ENCODE measurements at regions of chr19 and their contacts with region 1.

Region 1: DNA sequence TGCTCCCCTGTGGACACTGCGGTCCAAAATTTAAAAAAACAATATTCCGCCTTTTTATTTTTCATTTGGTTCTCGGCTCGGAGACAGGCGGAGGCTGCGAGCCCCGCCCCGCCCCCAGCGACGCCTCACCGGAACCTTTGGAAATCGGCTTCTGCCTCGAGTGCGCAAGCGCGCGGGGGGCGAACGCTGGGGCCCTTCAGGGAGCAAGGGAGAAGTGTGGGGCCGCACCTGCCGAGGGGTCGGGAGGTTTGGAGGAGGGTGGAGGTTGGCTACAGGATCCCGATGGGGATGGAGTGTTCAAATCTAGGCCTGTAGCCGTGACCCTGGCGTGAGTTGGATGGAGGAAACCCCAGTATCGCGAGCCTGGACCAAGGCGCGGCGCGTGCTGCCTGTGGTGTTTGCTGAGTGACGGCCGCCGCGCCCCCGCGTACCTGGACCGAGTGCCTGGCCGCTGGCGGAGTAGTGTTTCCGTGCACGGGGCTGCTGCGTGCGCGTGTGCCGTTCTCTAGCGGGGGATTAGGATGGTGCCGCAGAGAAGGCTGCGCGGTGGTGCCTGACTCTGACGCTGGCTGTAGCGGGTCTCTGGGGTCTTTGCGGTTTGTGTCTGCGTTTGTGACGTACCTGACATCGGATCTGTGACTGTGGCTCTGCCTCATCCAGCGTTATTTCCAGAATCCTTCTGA is 565 bp upstream of the ZFP30 start:
- DNase-seq: peak; percentile 83
- H3K4me3 Mint-ChIP-seq: peak overlapping the region; percentile 90
- H3K27ac Mint-ChIP-seq: peak overlapping the region; percentile 93
- H3K4me1 Mint-ChIP-seq: peaks cover 28% of the 10 kb centered on the region
- H3K27me3 Mint-ChIP-seq: no peaks in the 10 kb centered on the region

Region 2: GRCh38 chr19:37309834-37310575 is 345.8 kb before region 1 on chr19:
- intact Hi-C with region 1: loop called (anchors 10 kb)
- DNase-seq: no peak
- H3K4me3 Mint-ChIP-seq: no peak overlapping the region
- H3K27ac Mint-ChIP-seq: no peak overlapping the region
- H3K4me1 Mint-ChIP-seq: peaks cover 10% of the 10 kb centered on the region
- H3K27me3 Mint-ChIP-seq: no peaks in the 10 kb centered on the region

Region 3: GRCh38 chr19:37719111-37719926 is 63.5 kb after region 1 on chr19 and contains the start of gene ZNF607:
- intact Hi-C with region 1: loop called (anchors 2 kb)
- DNase-seq: peak; percentile 67
- H3K4me3 Mint-ChIP-seq: peak within 1 kb of the TSS; percentile 87
- H3K27ac Mint-ChIP-seq: peak within 1 kb of the TSS; percentile 67
- H3K4me1 Mint-ChIP-seq: peaks cover 9% of the 10 kb centered on the region
- H3K27me3 Mint-ChIP-seq: no peaks in the 10 kb centered on the region
- total RNA-seq, gene ZNF607: 1.9 and 2.4 TPM in 2 replicates

Region 4: DNA sequence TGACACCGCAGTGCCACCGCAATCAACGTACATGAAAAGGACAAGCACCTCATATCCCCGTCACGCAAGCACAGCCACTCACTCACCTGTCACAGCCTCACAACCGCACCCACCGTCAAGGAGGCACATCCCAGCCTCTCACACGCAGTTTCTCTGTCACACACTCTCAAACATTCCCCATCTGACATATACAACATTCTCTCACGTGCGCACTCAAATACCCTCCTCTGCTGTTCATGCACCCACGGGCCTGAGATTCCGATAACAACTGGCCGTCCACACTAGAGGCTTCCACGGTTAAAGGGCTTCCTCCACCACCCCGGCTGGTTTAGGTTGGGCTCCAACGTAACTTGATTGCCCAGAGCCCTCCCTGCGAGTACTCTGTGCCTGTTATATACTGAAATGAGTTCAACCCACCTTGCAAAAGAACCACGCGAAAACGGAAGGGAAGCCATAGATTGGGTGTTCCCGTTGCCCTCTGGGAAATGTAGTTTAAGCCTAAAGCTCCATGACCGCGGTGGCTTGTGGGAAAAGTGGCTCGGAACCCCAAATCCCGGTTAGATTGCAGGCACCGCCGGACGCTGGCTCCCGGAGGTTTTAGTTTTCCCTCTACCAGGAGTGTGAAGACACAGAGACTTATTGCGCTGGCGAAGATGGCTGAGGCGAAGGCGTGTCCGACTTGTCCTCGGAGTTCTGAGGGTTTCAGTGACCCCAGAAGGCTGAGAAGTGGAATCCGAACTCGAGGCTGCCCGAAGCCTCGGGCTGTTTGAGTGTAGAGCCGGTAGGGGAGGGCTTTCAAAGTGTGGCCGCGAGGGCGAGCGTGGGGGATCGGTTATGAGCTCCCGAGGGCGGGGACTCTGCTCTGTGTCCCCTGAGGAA is 123.5 kb after region 1 on chr19 and contains the start of gene ZNF573:
- intact Hi-C with region 1: loop called (anchors 1 kb)
- DNase-seq: peak; percentile 73
- H3K4me3 Mint-ChIP-seq: peak within 1 kb of the TSS; percentile 95
- H3K27ac Mint-ChIP-seq: peak within 1 kb of the TSS; percentile 86
- H3K4me1 Mint-ChIP-seq: peaks cover 15% of the 10 kb centered on the region
- H3K27me3 Mint-ChIP-seq: no peaks in the 10 kb centered on the region
- total RNA-seq, gene ZNF573: 3.7 and 5.6 TPM in 2 replicates

Region 5: GRCh38 chr19:38849860-38850435 is 1194.1 kb after region 1 on chr19 and contains the start of gene HNRNPL:
- intact Hi-C with region 1: no loop called
- DNase-seq: peak; percentile 99
- H3K4me3 Mint-ChIP-seq: peak within 1 kb of the TSS; percentile 97
- H3K27ac Mint-ChIP-seq: peak within 1 kb of the TSS; percentile 99
- H3K4me1 Mint-ChIP-seq: peaks cover 50% of the 10 kb centered on the region
- H3K27me3 Mint-ChIP-seq: peaks cover 2% of the 10 kb centered on the region
- total RNA-seq, gene HNRNPL: 632 and 659 TPM in 2 replicates